Heart left ventricle (tissue), 16 donors: ENCODE measurements at regions of chr7 and their contacts with region 1.

Region 1: DNA sequence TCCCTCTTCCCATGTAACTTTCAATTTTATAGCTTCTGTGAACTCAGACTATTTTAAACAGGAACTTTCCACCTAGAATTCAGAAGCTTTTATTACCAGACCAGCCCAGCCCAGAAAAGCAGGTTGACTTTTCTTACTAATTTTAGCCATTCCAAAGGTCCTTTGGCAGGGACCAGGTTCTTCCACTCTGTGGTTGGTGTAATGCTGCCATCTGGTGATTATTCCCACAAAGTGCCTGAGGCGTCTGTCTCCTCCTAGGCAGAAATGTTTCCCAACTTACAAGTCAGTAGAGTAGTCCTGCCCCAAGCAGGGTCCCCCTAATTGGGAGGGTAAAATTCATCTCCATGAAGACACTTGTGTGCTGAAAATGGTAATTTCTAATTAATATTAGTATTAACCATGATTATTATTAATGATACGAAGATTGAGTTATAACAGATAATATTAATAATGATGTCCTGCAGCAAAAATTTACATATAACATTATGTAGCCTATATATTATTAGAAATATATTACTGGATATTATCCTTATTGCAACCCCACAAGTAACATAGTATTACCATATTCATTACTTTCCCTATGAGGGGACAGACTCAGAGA is 53.0 kb upstream of the PPP1R17 start:
- DNase-seq: peak in 3 of 5 donors; percentile 25 to 38 (median 27)
- ATAC-seq: peak; percentile 64 to 89 (median 80)
- H3K4me3 ChIP-seq: no peak overlapping the region
- H3K27ac ChIP-seq: no peak overlapping the region
- H3K4me1 ChIP-seq: peaks cover 0 to 4% (median 0%) of the 10 kb centered on the region in 12 donors
- H3K27me3 ChIP-seq: no peaks in the 10 kb centered on the region
- CTCF ChIP-seq: peak; percentile 41 to 74 (median 64)
- POLR2A ChIP-seq: no peak

Region 2: DNA sequence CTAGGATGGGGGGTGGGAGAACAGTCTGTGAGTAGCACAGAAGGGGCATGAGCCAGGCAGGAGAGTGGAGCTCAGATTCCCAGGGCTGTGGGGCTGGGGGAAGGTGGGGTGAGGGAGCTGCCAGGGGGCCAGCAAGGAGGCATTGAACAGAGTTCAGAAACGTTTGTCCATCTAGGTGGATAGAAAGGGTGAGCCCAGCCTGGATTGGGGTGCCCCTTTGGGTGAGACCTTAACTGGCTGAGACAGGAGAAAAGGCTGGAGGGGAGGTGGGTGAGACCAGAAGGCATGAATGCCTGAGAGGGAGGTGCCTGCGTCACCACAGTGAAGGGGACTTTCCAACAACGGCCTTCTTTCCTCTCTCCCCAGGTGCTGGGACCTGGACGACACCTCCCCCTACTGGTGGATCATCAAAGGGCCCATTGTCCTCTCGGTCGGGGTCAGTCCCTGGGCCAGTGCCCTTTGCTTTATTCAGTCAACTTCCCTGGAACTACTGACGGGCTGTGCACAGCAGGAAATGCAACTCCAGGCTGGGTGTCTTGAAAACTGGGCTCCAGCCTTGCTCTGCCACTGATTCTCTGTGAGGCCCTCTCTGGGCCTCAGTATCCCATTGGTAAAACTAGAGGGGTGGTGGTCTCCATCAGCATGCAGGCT is 659.3 kb before region 1 on chr7:
- intact Hi-C with region 1: loop called in 1 of 10 experiments (anchors 5 kb)
- DNase-seq: peak in 3 of 5 donors; percentile 56 to 69 (median 60)
- ATAC-seq: peak; percentile 62 to 85 (median 78)
- H3K4me3 ChIP-seq: no peak overlapping the region
- H3K27ac ChIP-seq: no peak overlapping the region
- H3K4me1 ChIP-seq: peaks cover 0 to 19% (median 1%) of the 10 kb centered on the region in 12 donors
- H3K27me3 ChIP-seq: peaks cover 0 to 4% (median 0%) of the 10 kb centered on the region in 9 donors
- CTCF ChIP-seq: peak; percentile 68 to 85 (median 78)
- POLR2A ChIP-seq: no peak

Region 3: DNA sequence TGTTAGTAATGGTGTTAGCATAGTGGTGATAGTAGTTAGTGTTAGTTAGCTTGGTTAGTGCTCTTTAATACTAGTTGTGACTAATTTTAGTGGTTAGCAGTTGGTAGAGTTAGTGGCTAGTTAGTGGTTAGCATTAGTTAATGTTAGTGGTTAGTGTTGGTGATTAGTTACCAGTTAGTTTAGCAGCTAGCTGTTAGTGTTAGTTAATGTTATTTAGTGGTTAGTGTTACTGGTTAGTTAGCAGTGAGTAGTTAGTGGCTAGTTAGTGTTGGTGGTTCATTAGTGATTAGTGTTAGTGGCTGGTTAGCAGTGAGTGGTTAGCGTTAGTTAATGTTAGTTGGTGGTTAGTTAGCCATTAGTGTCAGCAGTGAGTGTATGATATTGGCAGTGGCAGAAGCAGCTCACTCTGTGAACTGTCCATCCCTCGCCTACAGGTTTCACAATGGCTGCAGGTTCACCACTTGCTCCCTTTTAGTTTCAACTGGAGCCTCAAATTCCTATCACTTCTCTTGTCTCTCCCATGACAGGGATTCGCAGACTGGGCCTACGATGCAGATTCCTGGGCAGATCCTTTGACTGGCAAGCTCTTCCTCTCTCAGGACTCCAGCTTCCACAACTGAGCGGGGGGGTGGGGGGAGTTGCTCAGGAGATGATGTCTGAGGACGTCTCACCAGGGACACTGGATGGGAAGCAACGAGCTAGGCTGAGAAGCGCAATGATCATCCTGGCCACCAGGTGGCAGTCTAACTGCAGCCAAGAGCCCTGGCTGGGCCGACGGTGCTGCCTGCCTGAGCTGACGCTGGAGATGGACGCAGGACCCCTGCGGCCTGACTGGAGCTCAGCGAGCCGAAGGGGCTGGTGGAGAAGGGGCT is 650.7 kb before region 1 on chr7:
- intact Hi-C with region 1: loop called in 3 of 10 experiments (anchors 5 to 10 kb)
- DNase-seq: peak; percentile 78 to 90 (median 83)
- ATAC-seq: peak; percentile 27 to 93 (median 86)
- H3K4me3 ChIP-seq: no peak overlapping the region
- H3K27ac ChIP-seq: no peak overlapping the region
- H3K4me1 ChIP-seq: peaks cover 0 to 13% (median 5%) of the 10 kb centered on the region in 12 donors
- H3K27me3 ChIP-seq: peaks cover 0 to 11% (median 0%) of the 10 kb centered on the region in 9 donors
- CTCF ChIP-seq: peak; percentile 79 to 98 (median 94)
- POLR2A ChIP-seq: no peak

Region 4: DNA sequence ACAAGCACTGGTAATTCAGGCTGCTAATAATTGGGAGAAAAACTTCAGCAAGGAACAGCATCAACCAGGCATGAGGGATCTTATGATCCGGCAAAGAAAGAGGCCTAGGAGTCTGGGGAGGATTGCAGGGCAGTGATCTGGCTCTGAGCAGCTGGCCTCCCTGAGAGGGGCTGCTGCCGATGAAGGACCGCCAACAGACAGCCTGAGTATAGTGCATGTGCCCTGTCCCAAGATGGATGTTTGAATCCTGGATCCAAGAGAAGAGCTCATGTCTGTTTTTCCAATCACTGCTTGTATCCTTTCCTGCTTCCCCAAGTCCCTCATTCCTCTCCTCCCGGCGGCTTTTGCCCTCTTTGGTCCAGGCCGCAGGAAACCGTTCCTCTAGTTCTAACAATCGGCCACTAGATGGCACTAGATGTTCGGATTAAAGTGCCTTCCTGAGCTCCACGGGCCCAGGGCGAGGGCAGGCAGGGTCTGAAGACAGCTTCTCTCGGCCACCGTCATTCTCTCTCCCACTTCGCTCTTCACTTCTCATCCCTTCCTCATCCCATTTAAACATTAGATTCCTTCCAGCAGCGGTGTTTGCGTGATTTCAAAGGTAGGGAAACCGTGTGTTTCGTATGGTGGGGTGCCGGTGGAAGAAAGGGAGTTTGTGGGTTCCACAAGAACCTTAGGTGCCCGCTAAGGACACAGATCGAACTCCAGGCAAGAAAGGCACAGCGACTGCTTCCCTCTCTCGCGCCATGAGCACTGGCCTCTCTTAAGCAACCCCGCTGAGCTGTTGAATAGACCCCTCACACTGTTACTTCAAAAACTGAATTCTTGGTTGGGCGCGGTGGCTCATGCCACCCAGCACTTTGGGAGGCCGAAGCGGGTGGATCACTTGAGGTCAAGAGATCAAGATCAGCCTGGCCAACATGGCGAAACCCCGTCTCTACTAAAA is 499.5 kb before region 1 on chr7:
- intact Hi-C with region 1: loop called (anchors 1 to 5 kb)
- DNase-seq: peak; percentile 64 to 80 (median 70)
- ATAC-seq: peak; percentile 89 to 97 (median 93)
- H3K4me3 ChIP-seq: no peak overlapping the region
- H3K27ac ChIP-seq: peak overlapping the region in 3 of 12 donors; percentile 5 to 22 (median 7)
- H3K4me1 ChIP-seq: peaks cover 0 to 5% (median 0%) of the 10 kb centered on the region in 12 donors
- H3K27me3 ChIP-seq: peaks cover 0 to 5% (median 0%) of the 10 kb centered on the region in 9 donors
- CTCF ChIP-seq: peak; percentile 66 to 83 (median 76)
- POLR2A ChIP-seq: no peak

Region 5: GRCh38 chr7:31192986-31193385 is 441.0 kb before region 1 on chr7:
- intact Hi-C with region 1: loop called in 5 of 10 experiments (anchors 1 to 10 kb)
- DNase-seq: peak; percentile 35 to 75 (median 62)
- ATAC-seq: peak; percentile 58 to 91 (median 85)
- H3K4me3 ChIP-seq: peak overlapping the region in 2 of 12 donors; percentile 32 to 38
- H3K27ac ChIP-seq: no peak overlapping the region
- H3K4me1 ChIP-seq: peaks cover 0 to 6% (median 0%) of the 10 kb centered on the region in 12 donors
- H3K27me3 ChIP-seq: peaks cover 0 to 20% (median 3%) of the 10 kb centered on the region in 9 donors
- CTCF ChIP-seq: peak; percentile 48 to 81 (median 65)
- POLR2A ChIP-seq: no peak

Region 6: GRCh38 chr7:31373337-31374289 is 260.4 kb before region 1 on chr7:
- intact Hi-C with region 1: loop called in 2 of 10 experiments (anchors 10 kb)
- DNase-seq: no peak
- ATAC-seq: peak in 2 of 4 donors; percentile 38 to 60
- H3K4me3 ChIP-seq: no peak overlapping the region
- H3K27ac ChIP-seq: no peak overlapping the region
- H3K4me1 ChIP-seq: no peaks in the 10 kb centered on the region
- H3K27me3 ChIP-seq: peaks cover 0 to 38% (median 0%) of the 10 kb centered on the region in 9 donors
- CTCF ChIP-seq: peak in 11 of 12 donors; percentile 22 to 59 (median 46)
- POLR2A ChIP-seq: no peak

Region 7: DNA sequence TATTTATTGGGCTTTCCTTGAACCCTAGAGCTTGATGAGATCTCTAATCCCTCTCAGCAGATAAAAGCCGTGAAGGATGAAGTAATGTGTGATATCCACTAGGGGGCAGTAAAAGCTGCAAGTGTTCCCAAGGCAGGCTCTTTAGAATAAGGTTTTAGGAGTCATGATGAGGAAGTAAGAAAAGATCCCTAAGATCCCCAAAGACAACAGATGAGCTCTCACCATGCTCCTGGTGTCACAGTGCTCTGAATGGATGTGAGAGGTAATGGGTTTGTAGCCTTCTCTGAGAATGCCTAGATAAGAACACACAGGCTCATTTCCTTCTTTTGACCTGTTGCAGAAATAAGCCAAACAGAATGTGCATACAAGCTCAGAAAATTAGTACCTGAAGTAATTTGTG is 190.5 kb before region 1 on chr7:
- intact Hi-C with region 1: loop called in 9 of 10 experiments (anchors 2 to 10 kb)
- DNase-seq: no peak
- ATAC-seq: peak in 2 of 4 donors; percentile 55 to 62
- H3K4me3 ChIP-seq: no peak overlapping the region
- H3K27ac ChIP-seq: no peak overlapping the region
- H3K4me1 ChIP-seq: no peaks in the 10 kb centered on the region
- H3K27me3 ChIP-seq: peaks cover 0 to 30% (median 3%) of the 10 kb centered on the region in 9 donors
- CTCF ChIP-seq: peak; percentile 62 to 86 (median 76)
- POLR2A ChIP-seq: no peak

Region 8: DNA sequence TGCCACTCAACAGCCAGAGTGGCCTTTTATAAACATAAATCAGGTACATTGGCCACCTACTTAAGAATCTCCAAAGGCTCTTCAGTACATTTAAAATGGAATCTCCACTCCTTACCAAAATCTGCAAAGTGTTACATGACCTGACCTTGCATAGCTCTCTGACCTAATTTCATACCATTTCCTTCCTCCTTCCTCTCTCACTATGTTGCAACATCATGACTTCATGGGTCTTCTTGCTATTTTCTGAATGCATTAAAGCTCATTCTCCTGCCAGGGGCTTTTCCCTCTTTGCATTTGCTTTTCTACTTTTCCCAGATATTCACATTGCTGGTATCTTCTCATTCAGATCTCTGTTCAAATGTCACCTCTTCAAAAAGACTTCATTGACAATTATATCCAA is 30.9 kb after region 1 on chr7:
- intact Hi-C with region 1: no loop called
- DNase-seq: no peak
- ATAC-seq: no peak
- H3K4me3 ChIP-seq: no peak overlapping the region
- H3K27ac ChIP-seq: no peak overlapping the region
- H3K4me1 ChIP-seq: peaks cover 0 to 12% (median 0%) of the 10 kb centered on the region in 12 donors
- H3K27me3 ChIP-seq: no peaks in the 10 kb centered on the region
- CTCF ChIP-seq: no peak
- POLR2A ChIP-seq: no peak

Region 9: DNA sequence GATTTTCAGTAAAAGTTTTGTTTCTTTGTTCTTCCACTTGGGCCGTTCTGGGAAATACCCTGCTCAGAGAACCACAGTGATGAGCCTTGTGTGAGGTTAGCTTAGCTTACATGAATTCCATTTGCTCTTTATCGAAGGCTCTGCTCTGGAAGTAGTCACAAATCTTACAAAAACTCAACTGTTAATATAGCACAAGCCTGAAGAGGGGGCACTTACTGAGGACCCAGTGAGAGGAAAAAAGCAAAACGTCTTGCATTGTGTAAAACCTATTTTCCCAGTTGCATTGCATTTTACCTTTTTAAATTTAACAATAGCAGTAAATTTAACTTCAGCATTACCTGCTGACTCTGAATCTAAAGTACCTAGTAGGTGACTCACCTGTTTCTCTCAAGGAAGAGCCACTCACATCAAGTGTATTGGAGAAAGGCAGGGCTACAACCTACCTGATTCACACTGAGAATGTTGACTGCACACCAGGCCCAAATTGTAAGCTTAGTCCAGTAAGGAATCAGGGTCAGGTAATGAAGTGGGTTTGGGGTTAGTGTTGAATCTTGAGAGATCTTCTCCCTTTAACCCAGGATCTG is 95.3 kb after region 1 on chr7:
- intact Hi-C with region 1: no loop called
- DNase-seq: no peak
- ATAC-seq: no peak
- H3K4me3 ChIP-seq: no peak overlapping the region
- H3K27ac ChIP-seq: no peak overlapping the region
- H3K4me1 ChIP-seq: no peaks in the 10 kb centered on the region
- H3K27me3 ChIP-seq: no peaks in the 10 kb centered on the region
- CTCF ChIP-seq: no peak
- POLR2A ChIP-seq: no peak

Region 10: GRCh38 chr7:31814187-31814586 is 180.2 kb after region 1 on chr7:
- intact Hi-C with region 1: no loop called
- DNase-seq: no peak
- ATAC-seq: no peak
- H3K4me3 ChIP-seq: no peak overlapping the region
- H3K27ac ChIP-seq: no peak overlapping the region
- H3K4me1 ChIP-seq: peaks cover 0 to 16% (median 0%) of the 10 kb centered on the region in 12 donors
- H3K27me3 ChIP-seq: no peaks in the 10 kb centered on the region
- CTCF ChIP-seq: peak in 9 of 12 donors; percentile 9 to 47 (median 36)
- POLR2A ChIP-seq: no peak